Activated CD4-positive, alpha-beta T cell treated with anti-CD3 and anti-CD28 coated beads, Interleukin-2, amount 10 ng/mL, durations not matched to agents 24 days and 14 days (primary cell): ENCODE measurements at regions of chr5 and their contacts with region 1.

Region 1: DNA sequence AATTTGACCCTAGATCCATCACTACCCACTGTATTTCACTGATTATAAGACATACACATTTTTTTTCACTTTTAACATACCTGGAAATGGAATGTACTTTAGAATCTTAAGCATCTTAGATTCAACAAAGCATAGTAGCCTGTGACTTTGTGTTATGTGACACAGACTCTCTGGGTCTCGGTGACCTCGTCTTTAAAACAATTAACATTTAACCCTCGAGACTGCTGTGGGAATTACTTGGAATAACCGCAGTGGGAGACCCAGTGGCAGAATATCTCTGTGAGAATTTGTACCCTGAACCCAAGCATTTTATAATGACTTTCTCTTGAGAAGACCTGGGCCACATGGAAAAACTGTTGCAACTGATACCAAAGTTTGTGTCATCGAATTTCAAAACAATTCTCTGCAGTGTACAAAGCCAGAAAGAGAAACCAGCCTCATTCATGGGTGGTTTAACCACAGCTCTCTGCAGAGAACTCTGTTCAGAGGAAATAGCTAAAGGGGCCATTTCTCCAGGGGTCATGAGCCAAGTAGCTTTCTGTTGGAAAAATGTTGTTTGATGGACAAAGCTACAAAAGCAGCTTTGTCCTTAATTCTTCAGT is 10.0 kb upstream of the RETREG1 start:
- DNase-seq: peak; percentile 86
- H3K4me3 Mint-ChIP-seq: peak overlapping the region; percentile 59
- H3K27ac Mint-ChIP-seq: peak overlapping the region; percentile 86
- H3K4me1 Mint-ChIP-seq: peaks cover 53% of the 10 kb centered on the region
- H3K27me3 Mint-ChIP-seq: no peaks in the 10 kb centered on the region

Region 2: DNA sequence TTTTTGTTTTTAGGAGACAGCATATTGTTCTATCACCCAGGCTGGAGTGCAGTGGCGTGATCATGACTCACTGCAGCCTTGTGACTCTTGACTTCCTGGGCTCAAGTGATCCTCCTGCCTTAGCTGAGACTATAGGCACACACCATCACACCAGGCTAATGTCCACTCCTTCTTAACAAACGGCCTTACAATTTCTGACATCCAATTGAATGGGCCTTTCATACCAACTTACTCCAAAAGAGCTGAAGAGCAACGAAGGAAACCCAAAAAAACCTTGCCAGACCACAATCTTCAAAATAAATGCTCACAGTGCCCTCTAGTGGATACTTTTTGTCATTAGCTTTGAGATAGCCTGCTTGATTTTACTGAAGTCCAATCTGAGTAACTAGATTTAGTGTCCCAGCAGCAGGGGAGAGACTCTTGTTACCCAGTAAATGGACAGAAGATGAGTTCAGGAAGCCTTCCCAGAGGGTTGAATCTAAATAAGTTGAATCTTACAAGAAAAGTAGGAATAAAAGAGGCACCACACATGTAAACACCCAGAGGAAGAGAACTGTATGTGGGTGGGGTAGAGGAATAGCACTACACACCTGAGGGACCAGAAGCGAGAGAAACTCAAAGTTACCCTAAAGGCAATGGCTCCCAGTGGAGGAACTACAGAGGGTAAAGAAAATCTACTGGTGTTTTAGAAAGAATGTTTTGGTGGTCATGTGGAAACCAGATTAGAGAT is 170.5 kb before region 1 on chr5:
- intact Hi-C with region 1: loop called (anchors 2 kb)
- DNase-seq: peak; percentile 80
- H3K4me3 Mint-ChIP-seq: peak overlapping the region; percentile 71
- H3K27ac Mint-ChIP-seq: peak overlapping the region; percentile 90
- H3K4me1 Mint-ChIP-seq: peaks cover 47% of the 10 kb centered on the region
- H3K27me3 Mint-ChIP-seq: no peaks in the 10 kb centered on the region

Region 3: DNA sequence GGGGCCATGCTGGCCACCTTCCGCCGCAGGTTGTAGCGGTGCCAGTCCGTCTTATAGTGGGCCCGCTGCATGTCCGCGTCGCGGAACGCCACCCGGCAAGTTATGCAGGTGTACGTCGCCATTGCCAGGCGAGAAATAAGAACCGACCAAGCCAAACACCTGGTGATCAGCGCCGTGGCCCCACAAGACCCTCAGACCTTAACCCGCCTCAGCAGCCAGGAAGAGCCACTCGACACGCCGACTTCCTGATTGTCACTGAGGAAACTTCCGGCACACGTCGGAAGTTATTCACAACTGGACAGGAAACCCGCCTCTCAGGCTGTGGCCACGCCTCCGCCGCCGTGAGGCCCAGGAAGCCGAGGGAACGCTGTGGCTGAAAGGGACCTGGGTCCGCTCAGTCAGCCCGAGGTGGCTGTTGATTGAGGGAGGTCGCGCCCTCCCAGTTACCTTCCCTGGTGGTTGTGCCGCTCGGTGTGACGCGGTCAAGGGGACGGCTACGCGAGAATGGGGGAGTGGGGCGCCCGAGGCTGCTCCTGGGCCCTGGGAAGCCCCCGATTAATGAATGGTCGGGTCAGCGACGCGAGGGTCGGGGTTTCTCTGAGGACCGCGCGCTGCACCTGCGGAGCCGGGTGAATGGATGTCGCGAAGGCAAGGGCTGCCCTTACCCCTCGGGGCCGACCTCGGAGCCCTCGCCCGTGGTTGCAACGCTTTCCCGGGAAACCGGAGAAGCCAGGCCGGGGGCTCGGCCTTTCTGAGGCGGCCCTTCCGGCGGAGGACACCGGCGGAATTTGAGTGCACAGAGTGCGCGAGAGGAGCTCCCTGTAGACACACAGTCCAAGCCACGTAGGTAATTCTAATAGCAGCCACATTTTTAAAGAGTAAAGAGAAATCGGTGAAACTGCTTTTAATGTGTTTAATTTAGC is 161.0 kb before region 1 on chr5 and contains the start of gene ZNF622:
- intact Hi-C with region 1: loop called (anchors 2 kb)
- DNase-seq: peak; percentile 97
- H3K4me3 Mint-ChIP-seq: peak within 1 kb of the TSS; percentile 99
- H3K27ac Mint-ChIP-seq: peak within 1 kb of the TSS; percentile 95
- H3K4me1 Mint-ChIP-seq: peaks cover 54% of the 10 kb centered on the region
- H3K27me3 Mint-ChIP-seq: no peaks in the 10 kb centered on the region
- total RNA-seq, gene ZNF622: 40.7 and 43.0 TPM in 2 replicates

Region 4: DNA sequence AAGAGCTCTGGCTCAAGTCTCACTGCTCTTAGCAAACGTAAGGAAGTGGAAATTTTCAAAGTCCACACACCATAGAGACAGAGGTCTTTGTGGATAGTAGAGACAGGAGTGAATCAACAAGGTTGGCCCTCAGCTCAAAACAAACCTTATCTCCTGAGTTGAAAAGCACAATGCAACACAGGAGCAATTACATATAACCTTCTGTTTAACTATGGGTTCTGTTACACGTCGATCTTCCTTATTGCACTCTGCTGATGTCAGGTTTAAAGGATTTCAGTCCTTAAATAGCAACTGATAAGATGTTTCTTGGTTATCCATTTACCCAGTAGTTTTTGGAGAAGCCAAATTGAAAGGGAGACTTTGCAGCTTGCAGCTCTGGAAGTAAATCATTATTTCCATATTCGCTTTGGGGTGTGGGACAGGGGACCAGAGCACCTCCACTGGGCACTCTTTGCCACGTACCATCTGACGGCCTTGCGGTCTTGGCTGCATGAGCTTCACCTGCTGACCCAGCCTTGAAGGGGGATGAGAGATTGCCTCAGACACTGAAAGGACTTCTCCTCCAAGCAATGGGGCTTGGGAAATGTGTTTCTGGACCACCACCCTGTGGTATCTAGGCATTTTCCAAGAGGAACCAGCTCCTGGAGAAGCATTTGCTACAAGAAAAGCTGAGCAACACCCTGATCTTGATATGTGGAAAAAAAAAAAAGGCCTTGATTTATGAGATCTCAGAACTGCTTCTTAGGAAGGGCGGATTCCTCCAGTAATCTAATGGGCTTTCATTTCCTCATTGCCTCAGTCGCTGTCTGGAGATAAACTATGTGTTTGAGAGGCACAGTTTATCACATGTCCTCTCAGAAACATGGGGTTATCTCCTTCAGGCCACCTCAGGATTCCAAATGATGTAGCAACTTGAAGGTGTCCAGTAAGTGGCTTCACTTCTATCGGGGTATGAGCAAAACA is 105.0 kb before region 1 on chr5:
- intact Hi-C with region 1: no loop called
- DNase-seq: no peak
- H3K4me3 Mint-ChIP-seq: no peak overlapping the region
- H3K27ac Mint-ChIP-seq: no peak overlapping the region
- H3K4me1 Mint-ChIP-seq: peaks cover 12% of the 10 kb centered on the region
- H3K27me3 Mint-ChIP-seq: no peaks in the 10 kb centered on the region

Region 5: GRCh38 chr5:16616536-16617273 is 10.1 kb before region 1 on chr5 and contains the start of gene RETREG1:
- intact Hi-C with region 1: loop called (anchors 1 kb)
- DNase-seq: peak; percentile 95
- H3K4me3 Mint-ChIP-seq: no peak within 1 kb of the TSS
- H3K27ac Mint-ChIP-seq: peak within 1 kb of the TSS; percentile 97
- H3K4me1 Mint-ChIP-seq: peaks cover 39% of the 10 kb centered on the region
- H3K27me3 Mint-ChIP-seq: no peaks in the 10 kb centered on the region
- total RNA-seq, gene RETREG1: 21.1 and 21.5 TPM in 2 replicates

Region 6: GRCh38 chr5:16666883-16667398 is 40.2 kb after region 1 on chr5:
- intact Hi-C with region 1: loop called (anchors 5 kb)
- DNase-seq: peak; percentile 76
- H3K4me3 Mint-ChIP-seq: no peak overlapping the region
- H3K27ac Mint-ChIP-seq: no peak overlapping the region
- H3K4me1 Mint-ChIP-seq: no peaks in the 10 kb centered on the region
- H3K27me3 Mint-ChIP-seq: no peaks in the 10 kb centered on the region